ENCODE measurements at regions of chr6 and their contacts with region 1.

Region 1: GRCh38 chr6:41371461-41371991 is 36.1 kb downstream of the NCR2 start:
- DNase-seq: peak in 1 of 2 donors; percentile 40
- H3K4me3 ChIP-seq: peak overlapping the region in 1 of 2 donors; percentile 15
- H3K27ac ChIP-seq: no peak overlapping the region
- H3K4me1 ChIP-seq: peaks cover 0 to 19% of the 10 kb centered on the region in 2 donors
- H3K27me3 ChIP-seq: peaks cover 8 to 24% of the 10 kb centered on the region in 2 donors
- CTCF ChIP-seq: peak in 3 of 4 experiments; percentile 19 to 37 (median 24)
- POLR2A ChIP-seq: no peak

Region 2: GRCh38 chr6:41505122-41506049 is 133.9 kb after region 1 on chr6:
- intact Hi-C with region 1: no loop called
- DNase-seq: peak; percentile 90 to 93
- H3K4me3 ChIP-seq: peak overlapping the region; percentile 21 to 46
- H3K27ac ChIP-seq: peak overlapping the region; percentile 83 to 98
- H3K4me1 ChIP-seq: peaks cover 7 to 12% of the 10 kb centered on the region in 2 donors
- H3K27me3 ChIP-seq: no peaks in the 10 kb centered on the region
- CTCF ChIP-seq: peak in 1 of 4 experiments; percentile 41
- POLR2A ChIP-seq: no peak

Region 3: DNA sequence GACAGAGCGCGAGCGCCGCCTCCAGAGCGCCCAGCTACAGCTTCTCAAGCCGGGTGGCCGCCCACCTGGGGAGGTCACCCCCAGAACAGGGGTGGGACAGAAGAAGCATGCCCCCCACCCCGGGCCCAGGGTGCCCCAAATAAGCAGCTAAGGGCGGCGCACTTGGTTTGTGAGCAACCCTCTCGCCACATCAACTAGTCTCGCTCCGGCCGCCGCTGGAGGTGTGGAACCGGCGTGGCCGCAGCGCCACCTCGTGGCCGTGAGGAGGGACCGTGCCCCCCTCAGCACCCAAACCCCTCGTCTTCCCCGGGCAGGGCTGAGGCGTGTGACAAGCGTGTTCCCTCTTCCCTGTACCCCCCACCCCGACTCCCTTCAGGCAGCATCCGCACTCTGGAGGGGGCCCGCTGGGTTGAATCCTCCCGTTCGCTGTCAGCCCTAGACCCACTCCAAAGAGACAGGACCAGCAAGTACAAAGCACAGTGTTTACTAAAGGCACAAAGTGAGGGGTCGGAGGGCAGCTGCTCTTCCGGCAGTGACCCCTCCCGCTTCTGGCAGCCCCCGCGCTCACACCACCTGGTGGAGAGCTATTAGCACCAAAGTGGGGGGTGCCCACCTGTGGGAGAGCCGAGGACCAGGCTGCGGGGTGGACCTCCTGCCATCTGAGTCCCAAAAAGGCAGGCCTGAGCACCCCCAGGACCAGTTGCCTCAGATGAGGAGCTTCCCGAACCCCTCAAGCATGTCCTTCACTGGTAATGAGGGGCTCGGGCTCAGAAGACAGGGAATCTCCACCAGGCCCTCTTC is 312.2 kb after region 1 on chr6:
- intact Hi-C with region 1: loop called (anchors 2 kb)
- DNase-seq: peak; percentile 75 to 79
- H3K4me3 ChIP-seq: peak overlapping the region; percentile 29 to 49
- H3K27ac ChIP-seq: peak overlapping the region; percentile 49 to 79
- H3K4me1 ChIP-seq: peaks cover 0 to 12% of the 10 kb centered on the region in 2 donors
- H3K27me3 ChIP-seq: no peaks in the 10 kb centered on the region
- CTCF ChIP-seq: peak; percentile 88 to 97 (median 91)
- POLR2A ChIP-seq: peak in 1 of 2 donors; percentile 25

Measured in uterus (tissue), 4 donors.